Posterior cingulate gyrus (tissue), 11 donors: ENCODE measurements at regions of chr22 and their contacts with region 1.

Region 1: GRCh38 chr22:41940832-41941765 is 5.9 kb downstream of the CENPM start:
- DNase-seq: peak; percentile 79 to 98 (median 90)

Region 2: DNA sequence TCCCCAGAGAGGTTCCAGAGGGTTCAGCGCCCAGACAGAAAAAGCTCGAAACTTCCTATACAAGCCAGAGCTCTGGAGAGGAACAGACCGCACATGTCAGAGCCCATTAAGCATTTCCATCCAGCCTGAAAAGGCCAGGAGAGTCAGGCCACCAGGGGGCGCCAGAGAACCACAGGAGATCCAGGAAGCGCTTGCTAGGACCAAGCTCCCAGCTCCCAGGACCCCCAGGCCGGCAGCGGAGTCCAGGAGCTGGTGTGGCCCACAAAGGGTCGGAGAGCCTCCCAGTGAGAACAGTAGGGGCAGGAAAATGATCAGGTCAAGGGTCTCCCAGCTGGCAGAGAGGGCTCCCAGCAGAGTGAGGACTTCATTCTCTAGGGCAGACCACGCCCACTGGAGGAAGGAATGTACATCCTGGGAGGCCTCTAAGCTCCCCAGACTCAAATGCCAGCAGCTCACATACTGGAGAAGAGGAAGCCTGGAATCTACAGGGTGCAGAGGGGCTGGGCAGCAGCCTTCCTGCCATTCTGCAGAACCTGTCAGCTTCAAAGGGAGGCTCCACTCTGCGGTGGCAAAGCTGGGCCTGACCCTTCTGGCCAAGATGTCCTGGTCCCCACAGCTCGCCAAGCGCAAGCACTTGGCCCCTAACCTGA is 243.8 kb before region 1 on chr22:
- intact Hi-C with region 1: loop called (anchors 2 kb)
- DNase-seq: peak; percentile 82 to 98 (median 96)

Region 3: DNA sequence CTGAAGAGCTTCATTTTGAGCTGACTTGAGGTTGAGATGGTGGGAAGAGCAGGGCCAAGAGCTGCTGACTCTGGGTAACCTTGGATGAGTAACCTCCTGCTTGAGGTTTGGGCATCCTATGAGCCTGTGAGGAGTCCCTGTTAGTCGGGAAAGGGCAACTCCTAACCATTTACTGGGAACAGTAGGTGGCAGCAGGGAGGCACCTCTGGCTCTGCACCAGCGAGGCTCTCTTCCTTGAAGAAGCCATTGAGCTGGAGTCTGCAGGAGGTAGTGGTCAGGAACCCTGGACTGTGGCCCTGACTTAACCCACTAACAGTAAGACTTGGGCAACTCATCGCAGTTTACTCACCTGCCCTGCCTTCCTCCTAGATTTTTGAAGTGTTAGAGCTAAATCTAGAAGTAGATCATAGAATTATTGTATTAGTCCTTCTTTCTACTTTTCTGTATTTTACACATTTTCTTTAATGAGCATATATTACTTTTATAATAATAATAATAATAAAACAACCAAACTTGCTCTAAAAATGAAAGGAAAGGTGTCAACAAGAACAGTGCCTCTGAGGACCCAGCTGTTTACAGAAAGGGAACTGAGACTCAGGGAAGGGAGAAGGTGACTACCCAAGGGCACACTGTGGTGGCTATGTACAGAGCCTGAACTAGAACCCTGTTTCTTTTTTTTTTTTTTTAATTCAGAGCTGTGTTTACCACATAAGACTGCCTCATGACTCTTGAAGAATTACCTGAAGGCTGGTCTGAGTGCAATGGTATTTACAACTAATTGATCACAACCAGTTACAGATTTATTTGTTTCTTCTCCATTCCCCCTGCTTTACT is 194.3 kb before region 1 on chr22:
- intact Hi-C with region 1: loop called (anchors 1 kb)
- DNase-seq: peak; percentile 43 to 96 (median 70)

Region 4: GRCh38 chr22:41822317-41823060 is 118.6 kb before region 1 on chr22:
- intact Hi-C with region 1: loop called (anchors 1 kb)
- DNase-seq: peak in 2 of 10 donors; percentile 55 to 80

Region 5: GRCh38 chr22:41925655-41926460 is 15.2 kb before region 1 on chr22:
- intact Hi-C with region 1: no loop called
- DNase-seq: peak in 3 of 10 donors; percentile 50 to 57 (median 54)

Region 6: GRCh38 chr22:42061041-42061440 is 119.9 kb after region 1 on chr22:
- intact Hi-C with region 1: no loop called
- DNase-seq: peak in 1 of 10 donors; percentile 18